ENCODE measurements at regions of chr17 and their contacts with region 1.

Region 1: GRCh38 chr17:41811549-41812380 is at the start of gene P3H4:
- DNase-seq: peak; percentile 72 to 88
- H3K4me3 ChIP-seq: peak within 1 kb of the TSS; percentile 59 to 84
- H3K27ac ChIP-seq: peak within 1 kb of the TSS; percentile 78 to 80
- H3K4me1 ChIP-seq: peaks cover 0 to 40% (median 31%) of the 10 kb centered on the region in 4 donors
- H3K27me3 ChIP-seq: no peaks in the 10 kb centered on the region
- CTCF ChIP-seq: peak; percentile 62 to 77

Region 2: GRCh38 chr17:41835800-41836549 is 24.2 kb after region 1 on chr17 and contains the start of gene NT5C3B:
- intact Hi-C with region 1: loop called (anchors 2 kb)
- DNase-seq: peak; percentile 38 to 78
- H3K4me3 ChIP-seq: peak within 1 kb of the TSS; percentile 81 to 83
- H3K27ac ChIP-seq: peak within 1 kb of the TSS; percentile 89 to 92
- H3K4me1 ChIP-seq: peaks cover 0 to 18% (median 15%) of the 10 kb centered on the region in 4 donors
- H3K27me3 ChIP-seq: no peaks in the 10 kb centered on the region
- CTCF ChIP-seq: no peak

Region 3: GRCh38 chr17:41864836-41865595 is 53.3 kb after region 1 on chr17 and contains the start of gene KLHL11:
- intact Hi-C with region 1: loop called (anchors 10 kb)
- DNase-seq: peak; percentile 86 to 93
- H3K4me3 ChIP-seq: peak within 1 kb of the TSS; percentile 96 to 100
- H3K27ac ChIP-seq: peak within 1 kb of the TSS; percentile 96 to 98
- H3K4me1 ChIP-seq: peaks cover 0 to 42% (median 25%) of the 10 kb centered on the region in 4 donors
- H3K27me3 ChIP-seq: no peaks in the 10 kb centered on the region
- CTCF ChIP-seq: peak; percentile 5 to 10

Measured in tibial artery (tissue), 4 donors.